WTC11 (cell line): ENCODE measurements at regions of chr15 and their contacts with region 1.

Region 1: DNA sequence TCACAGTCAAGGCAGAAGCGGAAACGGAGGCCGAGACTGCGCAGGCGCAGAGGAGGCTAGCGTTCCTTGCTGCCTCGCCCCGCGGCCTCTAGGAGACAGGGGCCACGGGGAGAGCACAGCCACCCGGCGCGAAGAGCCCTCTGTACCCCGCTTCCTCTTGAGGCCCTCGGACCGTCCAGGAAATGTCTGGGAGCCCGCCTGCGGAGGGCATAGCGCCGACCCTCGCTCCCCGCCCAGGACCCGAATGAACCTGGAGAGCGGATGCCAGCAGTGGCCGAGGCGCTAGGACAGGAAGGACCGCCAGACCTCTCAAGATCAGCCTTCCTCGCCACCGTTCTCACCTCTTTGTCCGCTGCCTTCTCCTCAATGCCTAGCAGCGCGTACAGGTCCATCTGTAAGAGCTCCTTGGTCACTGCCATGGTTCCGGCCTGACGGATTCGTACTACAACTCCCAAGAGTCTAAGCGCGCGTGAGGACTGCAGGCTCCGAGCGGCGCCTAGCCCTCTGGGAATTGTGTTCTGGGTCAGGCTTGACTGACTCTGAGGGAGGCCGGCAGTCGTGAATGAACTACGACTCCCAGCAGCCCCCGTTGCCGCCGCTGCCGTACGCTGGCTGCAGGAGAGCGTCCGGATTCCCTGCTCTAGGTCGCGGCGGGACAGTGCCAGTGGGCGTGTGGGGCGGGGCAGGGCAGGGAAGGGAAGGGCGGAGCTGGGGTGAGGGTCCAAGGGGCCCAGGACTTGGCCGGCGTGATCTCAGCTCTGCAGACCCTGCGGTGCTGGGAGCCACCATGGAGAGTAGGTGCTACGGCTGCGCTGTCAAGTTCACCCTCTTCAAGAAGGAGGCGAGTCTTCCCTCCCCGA is at the starts of genes DNAJC17 and ZFYVE19:
- DNase-seq: peak; percentile 97
- ATAC-seq: peak; percentile 99
- H3K4me3 Mint-ChIP-seq: peak within 1 kb of the TSS; percentile 98
- H3K27ac Mint-ChIP-seq: peak within 1 kb of the TSS; percentile 97
- H3K4me1 Mint-ChIP-seq: peaks cover 22% of the 10 kb centered on the region
- H3K27me3 Mint-ChIP-seq: no peaks in the 10 kb centered on the region
- CTCF ChIP-seq: no peak
- total RNA-seq, gene DNAJC17: 49.8 to 53.0 TPM (median 50.2 TPM) in 3 replicates
- total RNA-seq, gene ZFYVE19: 17.3 to 18.9 TPM (median 17.6 TPM) in 3 replicates

Region 2: DNA sequence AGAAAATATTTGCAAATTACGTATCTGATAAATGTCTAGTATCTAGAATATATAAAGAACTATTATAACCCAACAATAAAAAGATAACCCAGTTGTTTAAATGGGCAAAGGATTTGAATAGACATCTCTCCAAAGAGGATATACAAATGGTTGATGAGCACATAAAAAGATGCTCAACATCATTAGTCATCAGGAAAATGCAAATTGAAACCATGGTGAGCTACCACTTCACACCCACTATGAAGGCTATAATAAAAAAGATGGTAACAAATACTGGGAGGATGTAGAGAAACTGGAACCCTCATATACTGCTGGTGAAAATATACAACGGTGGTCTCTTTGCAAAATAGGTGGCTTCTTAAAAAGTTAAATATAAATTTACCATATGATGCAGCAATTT is 84.3 kb before region 1 on chr15:
- CTCF ChIA-PET with region 1: no interaction called
- POLR2A ChIA-PET with region 1: no interaction called
- DNase-seq: no peak
- ATAC-seq: no peak
- H3K4me3 Mint-ChIP-seq: no peak overlapping the region
- H3K27ac Mint-ChIP-seq: no peak overlapping the region
- H3K4me1 Mint-ChIP-seq: no peaks in the 10 kb centered on the region
- H3K27me3 Mint-ChIP-seq: no peaks in the 10 kb centered on the region
- CTCF ChIP-seq: no peak

Region 3: GRCh38 chr15:40782580-40783227 is 24.6 kb before region 1 on chr15:
- CTCF ChIA-PET with region 1: interaction called, 11 read pairs
- POLR2A ChIA-PET with region 1: interaction called, 3 read pairs
- DNase-seq: peak; percentile 75
- ATAC-seq: peak; percentile 74
- H3K4me3 Mint-ChIP-seq: no peak overlapping the region
- H3K27ac Mint-ChIP-seq: peak overlapping the region; percentile 54
- H3K4me1 Mint-ChIP-seq: peaks cover 37% of the 10 kb centered on the region
- H3K27me3 Mint-ChIP-seq: no peaks in the 10 kb centered on the region
- CTCF ChIP-seq: no peak

Region 4: GRCh38 chr15:40847205-40847961 is 40.1 kb after region 1 on chr15:
- CTCF ChIA-PET with region 1: no interaction called
- POLR2A ChIA-PET with region 1: interaction called, 10 read pairs
- DNase-seq: no peak
- ATAC-seq: peak; percentile 27
- H3K4me3 Mint-ChIP-seq: peak overlapping the region; percentile 93
- H3K27ac Mint-ChIP-seq: peak overlapping the region; percentile 57
- H3K4me1 Mint-ChIP-seq: peaks cover 41% of the 10 kb centered on the region
- H3K27me3 Mint-ChIP-seq: no peaks in the 10 kb centered on the region
- CTCF ChIP-seq: no peak

Region 5: DNA sequence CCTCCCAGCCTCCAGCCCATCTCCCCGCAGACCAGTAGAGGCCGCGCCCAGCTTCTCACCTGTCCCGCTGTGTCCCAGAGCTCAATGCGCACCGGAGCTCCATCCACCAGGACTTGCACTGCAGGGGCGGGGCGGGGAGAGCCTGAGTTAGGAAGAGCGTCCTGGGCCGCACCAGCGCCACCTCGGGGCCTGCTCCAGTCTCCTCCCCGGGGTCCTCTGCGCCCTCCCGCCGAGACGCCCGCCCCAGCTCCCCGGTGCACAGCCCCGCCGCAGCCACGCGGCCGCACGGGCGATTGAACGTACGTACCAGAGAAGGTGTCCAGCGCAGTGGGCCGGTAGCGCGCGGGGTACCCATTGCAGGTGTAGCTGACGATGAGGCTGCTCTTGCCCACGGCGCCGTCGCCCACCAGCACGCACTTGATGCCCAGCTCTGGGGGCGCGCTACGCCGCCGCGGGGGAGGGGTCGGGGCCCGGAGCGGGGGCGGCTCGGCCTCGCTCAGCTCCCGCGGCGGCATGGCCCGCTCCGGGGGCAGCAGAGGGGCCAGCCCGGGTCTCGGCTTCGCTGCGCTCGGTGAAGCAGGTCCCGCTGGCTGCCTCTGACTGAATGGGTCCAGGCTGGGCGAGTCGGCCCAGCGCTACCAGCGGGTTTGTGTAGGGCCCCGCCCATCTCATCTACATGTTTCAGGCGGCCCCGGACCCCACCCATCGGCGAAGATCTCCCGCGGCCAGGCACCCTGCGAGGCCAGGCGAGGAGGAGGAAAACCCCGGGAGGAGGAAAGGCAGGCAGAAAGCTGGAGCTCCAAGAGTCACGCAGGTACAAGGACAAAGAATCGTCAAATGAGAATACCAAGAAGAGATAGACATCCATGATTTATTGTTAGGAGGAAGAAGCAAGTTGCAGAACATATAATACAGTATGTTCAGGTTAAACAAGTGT is 66.6 kb after region 1 on chr15 and contains the start of gene RHOV:
- CTCF ChIA-PET with region 1: interaction called, 12 read pairs
- POLR2A ChIA-PET with region 1: no interaction called
- DNase-seq: peak; percentile 89
- ATAC-seq: peak; percentile 80
- H3K4me3 Mint-ChIP-seq: peak within 1 kb of the TSS; percentile 79
- H3K27ac Mint-ChIP-seq: no peak within 1 kb of the TSS; the same call in none of the 2 replicates
- H3K4me1 Mint-ChIP-seq: peaks cover 36% of the 10 kb centered on the region
- H3K27me3 Mint-ChIP-seq: peaks cover 4% of the 10 kb centered on the region; the same call in 1 of the 2 replicates
- CTCF ChIP-seq: no peak
- total RNA-seq, gene RHOV: 5.0 to 5.4 TPM (median 5.1 TPM) in 3 replicates